Natural killer cell (primary cell): ENCODE measurements at regions of chr9 and their contacts with region 1.

Region 1: DNA sequence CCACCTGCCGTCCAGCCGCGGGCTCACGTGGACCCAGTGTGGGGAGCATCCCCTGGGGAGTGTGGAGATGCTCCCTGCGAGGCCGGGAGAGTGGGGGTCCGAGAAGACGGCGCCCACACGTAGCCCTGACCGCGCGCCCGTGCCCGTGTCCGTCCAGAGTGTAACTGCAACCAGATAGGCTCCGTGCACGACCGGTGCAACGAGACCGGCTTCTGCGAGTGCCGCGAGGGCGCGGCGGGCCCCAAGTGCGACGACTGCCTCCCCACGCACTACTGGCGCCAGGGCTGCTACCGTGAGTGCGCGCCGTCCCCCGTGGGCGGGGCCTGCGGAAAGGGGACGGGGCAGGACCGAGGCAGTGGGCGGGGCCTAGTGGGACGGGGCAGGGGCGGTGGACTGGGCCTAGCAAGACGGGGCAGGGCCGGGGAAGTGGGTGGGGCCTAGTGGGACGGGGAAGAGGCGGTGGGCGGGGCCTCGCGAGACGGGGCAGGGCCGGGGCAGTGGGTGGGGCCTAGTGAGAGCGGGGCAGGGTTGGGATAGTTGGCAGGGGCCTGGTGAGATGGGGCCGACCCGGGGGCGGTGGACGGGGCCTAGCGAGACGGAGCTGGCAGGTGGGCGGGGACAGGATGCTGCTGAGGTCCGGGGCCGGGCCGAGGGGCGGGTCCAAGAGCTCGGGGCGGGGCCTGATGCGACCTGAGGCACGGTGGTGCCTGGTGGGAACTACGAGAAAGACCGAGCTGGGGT is 79.1 kb downstream of the NTNG2 start:
- DNase-seq: peak; percentile 97 to 99
- ATAC-seq: peak; percentile 83 to 95 (median 88)
- H3K4me3 ChIP-seq: peak overlapping the region; percentile 57
- H3K4me3 Mint-ChIP-seq: peak overlapping the region; percentile 91
- H3K27ac ChIP-seq: peak overlapping the region; percentile 16
- H3K27ac Mint-ChIP-seq: peak overlapping the region in 1 of 2 donors; percentile 92
- H3K4me1 ChIP-seq: peaks cover 32% of the 10 kb centered on the region
- H3K4me1 Mint-ChIP-seq: peaks cover 10 to 15% of the 10 kb centered on the region in 2 donors
- H3K27me3 ChIP-seq: peaks cover 6% of the 10 kb centered on the region
- H3K27me3 Mint-ChIP-seq: peaks cover 0 to 4% of the 10 kb centered on the region in 2 donors
- CTCF ChIP-seq: no peak

Region 2: GRCh38 chr9:131590908-131591844 is 649.7 kb before region 1 on chr9:
- intact Hi-C with region 1: loop called (anchors 10 kb)
- DNase-seq: peak; percentile 79 to 88
- ATAC-seq: peak; percentile 92 to 96 (median 94)
- H3K4me3 ChIP-seq: no peak overlapping the region
- H3K4me3 Mint-ChIP-seq: peak overlapping the region; percentile 63
- H3K27ac ChIP-seq: peak overlapping the region; percentile 21
- H3K27ac Mint-ChIP-seq: peak overlapping the region; percentile 81 to 89
- H3K4me1 ChIP-seq: peaks cover 23% of the 10 kb centered on the region
- H3K4me1 Mint-ChIP-seq: peaks cover 33 to 41% of the 10 kb centered on the region in 2 donors
- H3K27me3 ChIP-seq: no peaks in the 10 kb centered on the region
- H3K27me3 Mint-ChIP-seq: no peaks in the 10 kb centered on the region
- CTCF ChIP-seq: peak; percentile 90

Region 3: GRCh38 chr9:132169672-132170392 is 71.1 kb before region 1 on chr9:
- intact Hi-C with region 1: loop called (anchors 5 kb)
- DNase-seq: peak; percentile 57 to 79
- ATAC-seq: peak; percentile 65 to 75 (median 69)
- H3K4me3 ChIP-seq: no peak overlapping the region
- H3K4me3 Mint-ChIP-seq: no peak overlapping the region
- H3K27ac ChIP-seq: no peak overlapping the region
- H3K27ac Mint-ChIP-seq: no peak overlapping the region
- H3K4me1 ChIP-seq: no peaks in the 10 kb centered on the region
- H3K4me1 Mint-ChIP-seq: peaks cover 4 to 17% of the 10 kb centered on the region in 2 donors
- H3K27me3 ChIP-seq: no peaks in the 10 kb centered on the region
- H3K27me3 Mint-ChIP-seq: peaks cover 13 to 22% of the 10 kb centered on the region in 2 donors
- CTCF ChIP-seq: peak; percentile 85